GM12878 (cell line): ENCODE measurements at regions of chr4 and their contacts with region 1.

Region 1: DNA sequence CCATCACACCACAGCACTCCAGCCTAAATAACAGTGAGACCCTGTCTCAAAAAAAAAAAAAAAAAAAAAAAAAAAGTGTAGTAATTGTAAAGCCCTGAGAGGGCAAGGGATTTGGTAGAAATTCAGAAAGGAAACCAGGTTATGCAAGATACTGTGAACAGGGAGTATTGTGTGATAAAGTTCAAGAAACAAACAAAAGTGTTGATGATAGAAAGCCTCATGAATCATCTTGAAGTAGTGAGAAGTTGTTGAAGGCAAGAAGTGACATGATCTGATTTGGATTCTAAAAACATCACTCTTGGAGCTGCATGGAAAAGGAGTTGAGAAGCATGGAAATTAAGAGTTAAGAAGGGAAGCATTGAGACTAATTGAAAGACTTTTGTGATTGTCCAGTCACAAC is 102.2 kb downstream of the RAP1GDS1 start:
- DNase-seq: no peak
- ATAC-seq: no peak
- H3K4me3 ChIP-seq: no peak overlapping the region
- H3K27ac ChIP-seq: no peak overlapping the region
- H3K4me1 ChIP-seq: no peaks in the 10 kb centered on the region
- H3K27me3 ChIP-seq: no peaks in the 10 kb centered on the region
- CTCF ChIP-seq: no peak
- EP300 ChIP-seq: no peak
- POLR2A ChIP-seq: no peak
- RAD21 ChIP-seq: no peak

Region 2: GRCh38 chr4:98377559-98377958 is 14.1 kb after region 1 on chr4:
- CTCF ChIA-PET with region 1: no interaction called
- POLR2A ChIA-PET with region 1: no interaction called
- RAD21 ChIA-PET with region 1: no interaction called
- SMC1A ChIA-PET with region 1: interaction called, 11 read pairs
- in situ Hi-C with region 1: no loop called
- intact Hi-C with region 1: no loop called
- DNase-seq: no peak
- ATAC-seq: peak; percentile 63
- H3K4me3 ChIP-seq: no peak overlapping the region
- H3K27ac ChIP-seq: no peak overlapping the region
- H3K4me1 ChIP-seq: no peaks in the 10 kb centered on the region
- H3K27me3 ChIP-seq: no peaks in the 10 kb centered on the region
- CTCF ChIP-seq: no peak
- EP300 ChIP-seq: no peak
- POLR2A ChIP-seq: no peak
- RAD21 ChIP-seq: no peak

Region 3: DNA sequence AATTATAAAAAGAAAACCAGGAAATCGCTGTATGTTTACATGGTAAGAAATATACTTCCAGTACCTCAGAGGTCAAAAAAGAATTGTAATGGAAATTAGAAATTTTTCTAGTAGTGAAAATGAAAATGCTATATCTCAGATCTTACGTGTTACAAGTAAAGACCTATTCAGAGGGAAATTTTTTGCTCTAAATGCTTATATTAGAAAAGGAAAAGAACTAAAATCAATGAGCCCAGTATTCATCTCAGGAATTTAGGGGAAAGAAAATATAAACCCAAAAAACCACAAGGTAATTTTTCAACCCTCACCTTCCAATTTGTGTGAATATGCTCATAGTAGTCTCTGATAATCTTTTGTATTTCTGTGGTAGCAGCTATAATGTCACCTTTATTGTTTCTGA is 43.4 kb after region 1 on chr4:
- CTCF ChIA-PET with region 1: no interaction called
- POLR2A ChIA-PET with region 1: no interaction called
- RAD21 ChIA-PET with region 1: no interaction called
- SMC1A ChIA-PET with region 1: no interaction called
- in situ Hi-C with region 1: no loop called
- intact Hi-C with region 1: no loop called
- DNase-seq: no peak
- ATAC-seq: peak; percentile 81
- H3K4me3 ChIP-seq: no peak overlapping the region
- H3K27ac ChIP-seq: no peak overlapping the region
- H3K4me1 ChIP-seq: no peaks in the 10 kb centered on the region
- H3K27me3 ChIP-seq: no peaks in the 10 kb centered on the region
- CTCF ChIP-seq: no peak
- EP300 ChIP-seq: no peak
- POLR2A ChIP-seq: no peak
- RAD21 ChIP-seq: no peak